ENCODE measurements at regions of chr13 and their contacts with region 1.

Region 1: DNA sequence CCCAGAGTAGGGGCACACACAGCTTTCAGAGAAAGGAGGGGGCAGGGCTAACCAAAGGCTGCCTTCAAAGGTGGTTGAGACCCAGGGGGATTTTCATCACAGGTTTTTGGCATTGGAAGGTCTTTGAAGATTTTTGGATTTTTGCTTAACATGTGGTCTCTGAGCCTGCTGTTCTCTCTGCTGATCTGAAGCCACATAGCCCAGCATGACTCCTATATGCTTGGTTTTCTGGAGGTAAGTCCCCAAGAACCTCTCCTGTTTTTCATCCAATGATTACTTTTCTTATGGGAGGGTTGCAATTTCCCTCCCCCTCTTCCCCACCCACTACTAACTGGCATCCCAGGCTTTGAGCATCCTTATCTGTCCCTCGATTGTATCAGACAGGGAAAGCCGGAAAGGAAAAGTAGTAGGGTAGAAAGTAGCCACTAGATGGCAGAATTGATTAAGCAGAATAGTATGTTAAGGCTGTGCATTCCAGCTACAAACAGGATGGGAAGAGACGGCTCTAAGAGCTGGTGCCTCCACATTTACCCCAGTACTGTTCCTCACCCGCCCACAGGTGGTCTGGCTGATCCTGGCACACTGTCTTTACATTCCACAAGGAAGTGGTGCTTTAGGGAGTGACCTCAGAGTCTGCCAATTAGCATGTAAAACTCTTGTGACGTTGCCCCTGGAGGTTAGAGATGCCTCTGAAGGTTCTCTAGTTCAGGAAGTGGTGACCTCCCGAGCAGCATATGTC is 218.9 kb upstream of the EDNRB start:
- DNase-seq: peak; percentile 32
- CTCF ChIP-seq: peak; percentile 52

Region 2: DNA sequence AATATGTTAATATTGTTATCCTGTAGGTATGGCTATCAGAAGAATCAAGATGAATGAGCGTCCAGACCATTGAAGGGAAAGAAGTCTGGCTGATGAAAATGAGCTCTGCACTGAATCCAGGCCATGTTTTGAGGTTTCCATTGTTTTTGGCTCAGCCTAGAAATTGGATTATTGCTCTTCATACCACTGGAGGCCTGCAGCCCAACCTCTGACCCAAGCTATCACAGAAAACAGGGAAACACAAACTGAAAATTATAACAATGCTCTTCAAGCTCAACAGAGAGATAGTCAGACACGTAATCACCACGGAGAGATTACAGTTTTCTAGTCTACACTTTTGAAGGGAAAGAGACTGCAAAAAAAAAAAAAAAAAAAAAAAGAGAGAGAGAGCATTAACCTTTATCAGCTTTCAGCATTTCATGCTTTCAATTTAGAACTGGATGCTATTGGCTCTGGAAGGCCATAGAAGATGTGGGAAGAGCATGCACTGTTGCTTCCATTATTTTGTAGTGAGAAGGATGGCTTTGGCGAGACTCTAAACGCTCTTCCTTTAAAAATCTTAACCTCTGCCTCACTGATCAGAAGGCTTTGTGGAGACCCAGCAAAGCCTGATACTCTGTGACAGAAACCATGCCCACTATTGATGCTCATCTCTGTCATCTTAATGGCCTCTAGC is 229.8 kb before region 1 on chr13:
- in situ Hi-C with region 1: no loop called
- DNase-seq: no peak
- CTCF ChIP-seq: no peak

Region 3: GRCh38 chr13:78595495-78596398 is 458.2 kb after region 1 on chr13:
- in situ Hi-C with region 1: loop called (anchors 25 kb)
- DNase-seq: peak; percentile 61
- CTCF ChIP-seq: no peak

Region 4: GRCh38 chr13:78958006-78958405 is 820.4 kb after region 1 on chr13:
- in situ Hi-C with region 1: loop called (anchors 25 kb)
- DNase-seq: no peak
- CTCF ChIP-seq: no peak